GM12878 (cell line): ENCODE measurements at regions of chr10 and their contacts with region 1.

Region 1: GRCh38 chr10:65762311-65762710 is 1163.5 kb upstream of the LRRTM3 start:
- DNase-seq: no peak
- ATAC-seq: no peak
- H3K4me3 ChIP-seq: no peak overlapping the region
- H3K27ac ChIP-seq: no peak overlapping the region
- H3K4me1 ChIP-seq: no peaks in the 10 kb centered on the region
- H3K27me3 ChIP-seq: no peaks in the 10 kb centered on the region
- CTCF ChIP-seq: no peak
- EP300 ChIP-seq: no peak
- POLR2A ChIP-seq: no peak
- RAD21 ChIP-seq: no peak

Region 2: DNA sequence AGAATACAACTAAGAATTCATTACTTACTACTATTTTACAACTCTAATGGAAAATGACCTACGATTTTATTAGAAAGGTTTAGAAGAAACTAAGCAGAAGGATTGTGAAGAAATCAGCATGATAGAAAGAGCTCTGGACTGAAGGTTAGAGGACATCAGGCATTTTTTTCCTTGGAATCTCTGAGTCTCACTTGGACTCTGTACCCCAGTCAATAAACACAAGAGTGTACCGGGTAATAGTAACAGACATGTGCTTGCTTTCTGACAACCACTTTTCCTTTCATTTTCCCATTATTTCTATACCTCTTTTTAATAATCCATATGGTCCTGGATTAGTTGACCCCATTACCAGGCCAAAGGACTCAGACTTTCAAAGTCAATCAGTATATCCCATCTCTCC is 77.4 kb before region 1 on chr10:
- CTCF ChIA-PET with region 1: no interaction called
- POLR2A ChIA-PET with region 1: no interaction called
- RAD21 ChIA-PET with region 1: no interaction called
- SMC1A ChIA-PET with region 1: interaction called, 3 read pairs
- in situ Hi-C with region 1: no loop called
- intact Hi-C with region 1: loop called (anchors 2 kb)
- DNase-seq: no peak
- ATAC-seq: no peak
- H3K4me3 ChIP-seq: no peak overlapping the region
- H3K27ac ChIP-seq: no peak overlapping the region
- H3K4me1 ChIP-seq: no peaks in the 10 kb centered on the region
- H3K27me3 ChIP-seq: no peaks in the 10 kb centered on the region
- CTCF ChIP-seq: no peak
- EP300 ChIP-seq: no peak
- POLR2A ChIP-seq: no peak
- RAD21 ChIP-seq: no peak

Region 3: DNA sequence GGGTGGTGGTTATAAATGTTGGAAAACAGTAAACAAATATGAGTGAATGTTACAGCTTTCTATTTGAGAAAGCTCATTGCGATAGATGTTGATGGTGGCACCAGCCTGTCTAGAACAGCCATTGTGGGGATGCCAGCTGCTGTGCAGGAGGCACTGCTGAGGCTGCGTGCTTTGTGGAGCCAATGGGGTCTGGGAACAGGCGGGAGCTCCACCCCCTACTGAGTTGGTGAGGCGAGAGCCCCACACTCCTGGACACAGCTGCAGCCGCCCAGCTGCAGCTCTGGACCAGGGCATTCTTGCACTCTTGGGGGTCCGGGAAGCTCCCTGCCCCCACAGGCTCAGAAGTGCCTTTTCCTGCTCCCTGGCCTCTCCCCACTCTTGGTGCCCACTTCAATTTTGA is 16.4 kb after region 1 on chr10:
- CTCF ChIA-PET with region 1: no interaction called
- POLR2A ChIA-PET with region 1: no interaction called
- RAD21 ChIA-PET with region 1: no interaction called
- SMC1A ChIA-PET with region 1: no interaction called
- in situ Hi-C with region 1: no loop called
- intact Hi-C with region 1: no loop called
- DNase-seq: no peak
- ATAC-seq: no peak
- H3K4me3 ChIP-seq: no peak overlapping the region
- H3K27ac ChIP-seq: no peak overlapping the region
- H3K4me1 ChIP-seq: no peaks in the 10 kb centered on the region
- H3K27me3 ChIP-seq: no peaks in the 10 kb centered on the region
- CTCF ChIP-seq: no peak
- EP300 ChIP-seq: no peak
- POLR2A ChIP-seq: no peak
- RAD21 ChIP-seq: no peak